Left colon (tissue), 2 donors: ENCODE measurements at regions of chr4 and their contacts with region 1.

Region 1: GRCh38 chr4:20248155-20248558 is 3.5 kb upstream of the SLIT2 start:
- DNase-seq: no peak
- ATAC-seq: peak; percentile 33

Region 2: DNA sequence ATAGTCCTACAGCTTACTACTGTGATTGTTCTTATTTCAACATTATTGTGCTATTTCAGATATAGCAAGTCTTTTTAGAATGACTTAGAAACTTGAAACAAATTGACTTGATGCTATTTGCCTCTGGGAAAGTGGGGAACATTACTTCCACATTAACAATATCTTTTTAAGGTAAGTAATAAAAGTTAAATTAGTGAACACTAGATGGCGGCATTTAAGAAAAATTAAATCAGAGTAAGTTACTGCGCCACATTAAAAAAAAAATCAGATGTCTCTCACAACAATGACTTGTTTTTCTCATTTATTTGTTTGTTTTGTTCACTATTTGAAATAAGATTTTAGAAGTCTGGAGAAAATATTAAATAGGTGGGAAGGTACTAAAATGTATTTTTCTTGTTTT is 1023.3 kb before region 1 on chr4:
- intact Hi-C with region 1: loop called in 1 of 2 experiments (anchors 10 kb)
- DNase-seq: no peak
- ATAC-seq: no peak

Region 3: GRCh38 chr4:20337261-20337664 is 89.1 kb after region 1 on chr4:
- intact Hi-C with region 1: no loop called
- DNase-seq: no peak
- ATAC-seq: no peak